Activated B cell treated with CpG ODN at 0.5 μM for 24 hours (primary cell): ENCODE measurements at regions of chr1 and their contacts with region 1.

Region 1: GRCh38 chr1:156282479-156283222 is at the start of gene SMG5:
- DNase-seq: peak; percentile 89
- ATAC-seq: peak; percentile 91
- H3K4me3 Mint-ChIP-seq: peak within 1 kb of the TSS; percentile 93
- H3K27ac Mint-ChIP-seq: peak within 1 kb of the TSS; percentile 88
- H3K4me1 Mint-ChIP-seq: peaks cover 40% of the 10 kb centered on the region
- H3K27me3 Mint-ChIP-seq: no peaks in the 10 kb centered on the region
- CTCF ChIP-seq: no peak
- total RNA-seq, gene SMG5: 62.6 and 77.1 TPM in 2 replicates

Region 2: DNA sequence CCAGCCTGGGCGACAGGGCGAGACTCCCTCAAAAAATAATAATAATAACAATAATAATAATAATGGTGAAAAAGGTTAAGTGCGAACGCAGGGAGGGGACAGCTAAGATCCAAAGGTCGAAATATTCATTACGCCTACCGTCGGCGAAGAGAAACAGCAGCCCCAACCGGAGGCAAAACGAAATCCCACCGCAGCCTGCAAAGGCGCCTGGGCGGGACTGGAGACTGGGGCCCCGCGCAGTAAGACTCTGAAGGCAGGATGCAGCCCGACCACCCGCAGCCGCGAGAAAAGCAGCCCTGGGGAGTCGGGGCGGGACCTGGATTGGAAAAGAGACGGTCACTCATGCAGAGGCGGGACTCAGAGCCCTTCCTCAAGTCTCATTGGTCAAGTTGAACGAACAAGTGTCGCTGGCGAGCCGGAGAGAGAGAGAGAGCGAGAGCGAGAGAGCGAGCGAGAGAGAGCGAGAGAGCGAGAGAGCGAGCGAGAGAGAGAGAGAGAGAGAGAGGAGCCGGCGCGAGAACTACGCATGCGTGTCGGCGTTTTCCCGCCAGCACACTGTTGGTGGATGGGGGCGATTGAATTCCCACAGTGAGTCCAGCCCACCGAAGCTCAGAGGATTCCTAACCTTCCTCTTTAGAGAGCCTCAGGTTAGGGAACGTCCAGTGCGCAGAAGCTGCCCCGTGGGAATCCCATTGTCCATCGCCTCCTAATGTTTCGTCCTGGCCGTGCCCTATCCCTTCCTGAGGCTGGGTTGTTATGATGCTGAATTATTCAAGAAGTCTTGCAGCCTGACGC is 1038.1 kb before region 1 on chr1:
- CTCF ChIA-PET with region 1: no interaction called
- POLR2A ChIA-PET with region 1: no interaction called
- intact Hi-C with region 1: no loop called
- DNase-seq: peak; percentile 87
- ATAC-seq: peak; percentile 97
- H3K4me3 Mint-ChIP-seq: peak overlapping the region; percentile 85
- H3K27ac Mint-ChIP-seq: peak overlapping the region; percentile 96
- H3K4me1 Mint-ChIP-seq: peaks cover 39% of the 10 kb centered on the region
- H3K27me3 Mint-ChIP-seq: peaks cover 2% of the 10 kb centered on the region
- CTCF ChIP-seq: no peak

Region 3: DNA sequence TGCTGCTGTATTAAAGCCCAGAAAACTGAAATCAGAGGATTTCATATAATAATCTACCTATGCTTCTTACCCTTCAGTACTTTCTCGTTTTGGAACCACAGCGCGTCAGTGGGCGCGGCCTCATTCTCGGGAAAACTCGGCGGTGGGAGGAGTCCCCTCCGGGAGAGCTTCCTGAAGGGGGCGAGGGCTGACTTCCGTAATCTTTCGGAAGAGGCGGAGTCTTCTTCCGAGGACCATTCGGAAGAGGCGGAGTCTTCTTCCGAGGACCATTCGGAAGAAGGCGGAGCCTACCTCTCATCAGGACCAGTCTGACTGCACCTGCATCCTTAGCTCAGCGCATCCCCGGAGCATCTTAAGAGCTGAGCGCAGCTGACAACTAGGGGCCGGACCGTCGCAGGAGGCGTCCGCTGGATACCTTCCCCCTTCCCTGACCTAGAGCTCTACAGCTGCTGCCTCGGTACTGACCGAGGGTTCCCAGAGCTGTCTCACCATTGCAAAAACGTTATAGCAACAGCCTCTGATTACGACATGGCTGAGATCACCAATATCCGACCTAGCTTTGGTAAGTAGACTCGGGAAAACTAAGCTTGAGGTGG is 423.3 kb before region 1 on chr1 and contains the start of gene SYT11:
- CTCF ChIA-PET with region 1: no interaction called
- POLR2A ChIA-PET with region 1: no interaction called
- intact Hi-C with region 1: loop called (anchors 2 kb)
- DNase-seq: peak; percentile 82
- ATAC-seq: peak; percentile 91
- H3K4me3 Mint-ChIP-seq: peak within 1 kb of the TSS; percentile 98
- H3K27ac Mint-ChIP-seq: peak within 1 kb of the TSS; percentile 97
- H3K4me1 Mint-ChIP-seq: peaks cover 49% of the 10 kb centered on the region
- H3K27me3 Mint-ChIP-seq: peaks cover 2% of the 10 kb centered on the region
- CTCF ChIP-seq: no peak
- total RNA-seq, gene SYT11: 3.3 and 3.7 TPM in 2 replicates

Region 4: DNA sequence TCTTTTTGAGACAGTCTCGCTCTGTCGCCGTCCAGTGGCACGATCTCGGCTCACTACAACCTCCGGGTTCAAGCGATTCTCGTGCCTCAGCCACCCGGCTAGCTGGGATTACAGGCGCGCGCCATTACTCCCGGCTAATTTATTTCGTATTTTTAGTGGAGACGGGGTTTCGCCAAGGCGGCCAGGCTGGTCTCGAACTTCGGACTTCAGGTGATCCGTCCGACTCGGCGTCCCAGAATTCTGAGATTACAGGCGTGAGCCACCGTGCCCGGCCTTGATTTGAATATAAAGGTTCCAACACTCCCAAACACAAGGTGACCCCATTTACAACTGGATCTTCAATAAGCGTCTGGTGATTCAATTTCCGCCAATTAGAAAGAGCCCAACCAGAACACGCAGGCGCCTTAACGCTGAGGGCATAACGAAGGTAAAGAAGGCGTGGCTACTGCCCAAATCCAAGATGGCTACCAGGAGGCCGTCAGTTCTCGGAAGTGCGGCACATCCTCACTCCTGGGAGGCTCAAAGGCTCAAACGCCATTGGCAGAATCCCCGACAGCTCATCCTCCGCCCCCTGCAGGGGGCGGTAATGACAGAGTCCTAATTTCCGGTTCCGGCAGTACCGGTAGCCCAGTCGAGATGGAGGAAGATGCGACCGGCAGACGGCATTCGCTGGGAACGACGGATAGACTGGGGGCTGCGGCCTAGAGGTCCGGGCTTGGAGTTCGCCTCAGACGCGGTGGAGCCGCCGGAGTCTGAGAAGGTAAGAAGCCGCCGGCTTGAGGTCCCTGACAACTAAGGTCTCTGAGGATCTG is 89.0 kb before region 1 on chr1 and contains the start of gene SLC25A44:
- CTCF ChIA-PET with region 1: no interaction called
- POLR2A ChIA-PET with region 1: no interaction called
- intact Hi-C with region 1: loop called (anchors 1 kb)
- DNase-seq: peak; percentile 93
- ATAC-seq: peak; percentile 98
- H3K4me3 Mint-ChIP-seq: peak within 1 kb of the TSS; percentile 96
- H3K27ac Mint-ChIP-seq: peak within 1 kb of the TSS; percentile 91
- H3K4me1 Mint-ChIP-seq: peaks cover 38% of the 10 kb centered on the region
- H3K27me3 Mint-ChIP-seq: no peaks in the 10 kb centered on the region
- CTCF ChIP-seq: no peak
- total RNA-seq, gene SLC25A44: 17.9 and 26.4 TPM in 2 replicates

Region 5: DNA sequence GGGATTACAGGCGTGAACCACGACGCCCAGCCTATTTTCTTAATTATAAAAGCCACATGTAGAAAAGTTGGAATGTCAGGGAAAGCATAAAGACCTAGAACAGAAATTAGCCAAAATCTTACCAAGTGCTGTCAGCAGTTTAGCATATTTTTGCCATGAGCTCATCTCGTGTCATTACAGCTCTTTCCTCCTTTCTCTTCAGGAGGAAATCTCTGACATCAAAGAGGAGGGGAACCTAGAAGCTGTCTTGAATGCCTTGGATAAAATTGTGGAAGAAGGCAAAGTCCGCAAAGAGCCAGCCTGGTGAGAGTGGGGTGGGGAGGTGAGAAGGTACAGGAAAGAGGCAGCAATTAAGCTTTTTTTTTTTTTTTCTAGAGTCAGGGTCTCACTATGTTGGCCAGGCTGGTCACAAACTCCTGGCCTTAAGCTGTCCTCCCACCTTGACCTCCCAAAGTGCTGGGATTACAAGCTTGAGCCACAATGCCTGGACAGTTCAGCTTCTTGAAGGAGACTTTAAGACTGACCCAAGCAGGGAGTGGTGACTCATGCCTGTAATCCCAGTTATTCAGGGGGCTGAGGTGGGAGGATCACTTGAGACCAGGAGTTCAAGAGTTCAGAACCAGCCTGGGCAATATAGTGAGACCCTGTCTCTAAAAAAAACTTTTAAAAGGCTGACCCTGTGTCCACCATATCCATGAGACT is 49.1 kb before region 1 on chr1:
- CTCF ChIA-PET with region 1: no interaction called
- POLR2A ChIA-PET with region 1: interaction called, 10 read pairs
- intact Hi-C with region 1: no loop called
- DNase-seq: no peak
- ATAC-seq: no peak
- H3K4me3 Mint-ChIP-seq: no peak overlapping the region
- H3K27ac Mint-ChIP-seq: no peak overlapping the region
- H3K4me1 Mint-ChIP-seq: no peaks in the 10 kb centered on the region
- H3K27me3 Mint-ChIP-seq: no peaks in the 10 kb centered on the region
- CTCF ChIP-seq: no peak

Region 6: GRCh38 chr1:156263288-156263655 is 19.4 kb before region 1 on chr1:
- CTCF ChIA-PET with region 1: no interaction called
- POLR2A ChIA-PET with region 1: no interaction called
- intact Hi-C with region 1: no loop called
- DNase-seq: no peak
- ATAC-seq: no peak
- H3K4me3 Mint-ChIP-seq: no peak overlapping the region
- H3K27ac Mint-ChIP-seq: no peak overlapping the region
- H3K4me1 Mint-ChIP-seq: no peaks in the 10 kb centered on the region
- H3K27me3 Mint-ChIP-seq: no peaks in the 10 kb centered on the region
- CTCF ChIP-seq: no peak

Region 7: DNA sequence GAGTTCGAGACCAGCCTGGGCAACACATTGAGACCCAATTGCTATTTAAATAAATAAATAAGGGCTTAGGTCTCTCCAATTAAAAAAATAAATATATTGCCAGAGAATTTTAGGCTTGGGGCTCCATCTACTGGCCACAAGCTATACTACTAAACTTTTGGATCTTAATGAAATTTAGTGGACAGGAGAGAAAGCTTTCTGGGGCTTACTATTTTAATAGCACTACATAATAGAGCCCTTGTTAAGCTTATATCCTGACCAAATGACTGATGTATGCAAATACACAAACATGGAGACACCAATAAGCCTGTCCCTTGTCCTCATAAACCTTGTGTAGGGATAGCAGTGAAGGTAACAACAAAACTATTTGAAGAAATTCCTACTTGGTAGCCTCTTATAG is 37.0 kb after region 1 on chr1:
- CTCF ChIA-PET with region 1: interaction called, 6 read pairs
- POLR2A ChIA-PET with region 1: interaction called, 6 read pairs
- intact Hi-C with region 1: loop called (anchors 5 kb)
- DNase-seq: no peak
- ATAC-seq: no peak
- H3K4me3 Mint-ChIP-seq: no peak overlapping the region
- H3K27ac Mint-ChIP-seq: no peak overlapping the region
- H3K4me1 Mint-ChIP-seq: no peaks in the 10 kb centered on the region
- H3K27me3 Mint-ChIP-seq: no peaks in the 10 kb centered on the region
- CTCF ChIP-seq: no peak

Region 8: DNA sequence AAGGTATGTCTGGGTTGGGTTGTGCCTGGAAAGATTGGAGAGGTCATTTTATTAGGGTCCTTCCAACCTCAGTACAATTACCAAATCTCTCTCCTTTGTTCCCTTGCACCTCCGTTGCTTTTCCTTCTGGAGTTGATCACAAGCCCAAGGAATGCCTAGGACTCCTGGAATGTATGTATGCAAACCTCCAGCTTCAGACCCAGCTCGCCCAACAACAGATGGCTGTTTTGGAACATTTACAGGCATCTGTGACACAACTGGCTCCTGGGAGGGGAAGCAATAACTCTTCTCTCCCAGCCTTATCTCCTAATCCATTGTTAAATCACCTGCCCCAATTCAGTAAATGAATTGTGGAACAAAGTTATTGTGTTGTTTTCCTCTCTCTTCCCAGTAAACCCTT is 64.0 kb after region 1 on chr1:
- CTCF ChIA-PET with region 1: no interaction called
- POLR2A ChIA-PET with region 1: interaction called, 10 read pairs
- intact Hi-C with region 1: no loop called
- DNase-seq: no peak
- ATAC-seq: no peak
- H3K4me3 Mint-ChIP-seq: no peak overlapping the region
- H3K27ac Mint-ChIP-seq: no peak overlapping the region
- H3K4me1 Mint-ChIP-seq: no peaks in the 10 kb centered on the region
- H3K27me3 Mint-ChIP-seq: peaks cover 16% of the 10 kb centered on the region
- CTCF ChIP-seq: no peak